Heart right ventricle (tissue), 16 donors: ENCODE measurements at regions of chr18 and their contacts with region 1.

Region 1: DNA sequence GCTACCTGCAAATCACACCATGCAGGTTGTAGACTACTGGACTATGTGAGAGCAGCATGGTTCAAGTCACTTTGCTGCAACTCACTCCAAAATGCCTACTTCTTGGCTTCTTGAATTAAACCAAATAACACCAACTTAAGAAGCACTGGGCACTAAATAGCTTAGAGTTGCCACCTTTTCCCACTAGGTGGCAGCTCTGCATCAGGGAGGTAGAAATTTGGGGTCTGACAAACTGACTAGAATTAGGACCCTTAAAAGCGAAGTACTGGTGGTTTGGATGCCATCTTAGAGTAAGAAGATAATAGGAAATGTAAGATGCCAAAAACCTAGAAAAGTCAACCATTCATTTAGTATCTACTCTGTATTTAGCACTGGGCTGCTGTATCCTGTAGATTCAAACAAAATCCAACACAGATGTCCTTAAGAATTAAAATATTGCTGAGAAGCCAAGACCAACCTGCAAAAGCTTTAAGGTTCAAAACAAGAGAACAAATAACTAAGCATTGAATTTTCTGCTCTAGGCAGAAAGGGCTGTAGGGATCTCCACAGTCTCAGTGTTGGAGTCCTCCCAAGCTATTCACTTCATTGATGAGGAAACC is 65.5 kb downstream of the CCBE1 start:
- DNase-seq: no peak
- ATAC-seq: no peak
- H3K4me3 ChIP-seq: no peak overlapping the region
- H3K27ac ChIP-seq: no peak overlapping the region
- H3K4me1 ChIP-seq: peaks cover 0 to 18% (median 0%) of the 10 kb centered on the region in 9 donors
- H3K27me3 ChIP-seq: no peaks in the 10 kb centered on the region
- CTCF ChIP-seq: peak; percentile 6 to 62 (median 53)

Region 2: GRCh38 chr18:59814891-59815290 is 183.2 kb after region 1 on chr18:
- intact Hi-C with region 1: loop called in 7 of 10 experiments (anchors 5 to 10 kb)
- DNase-seq: no peak
- ATAC-seq: no peak
- H3K4me3 ChIP-seq: no peak overlapping the region
- H3K27ac ChIP-seq: no peak overlapping the region
- H3K4me1 ChIP-seq: no peaks in the 10 kb centered on the region
- H3K27me3 ChIP-seq: peaks cover 0 to 17% (median 0%) of the 10 kb centered on the region in 7 donors
- CTCF ChIP-seq: no peak